Transverse colon (tissue), 4 donors: ENCODE measurements at regions of chr19 and their contacts with region 1.

Region 1: GRCh38 chr19:50794439-50795237 is 4.4 kb downstream of the ACP4 start:
- DNase-seq: peak; percentile 38
- H3K4me3 ChIP-seq: no peak overlapping the region
- H3K27ac ChIP-seq: no peak overlapping the region
- H3K4me1 ChIP-seq: no peaks in the 10 kb centered on the region
- H3K27me3 ChIP-seq: peaks cover 8% of the 10 kb centered on the region
- CTCF ChIP-seq: peak in 3 of 5 experiments; percentile 23 to 29 (median 24)
- EP300 ChIP-seq: no peak
- POLR2A ChIP-seq: no peak

Region 2: GRCh38 chr19:50537762-50538230 is 256.8 kb before region 1 on chr19:
- in situ Hi-C with region 1: loop called in 3 of 4 experiments (anchors 10 to 25 kb)
- intact Hi-C with region 1: no loop called
- DNase-seq: peak; percentile 76
- H3K4me3 ChIP-seq: no peak overlapping the region
- H3K27ac ChIP-seq: no peak overlapping the region
- H3K4me1 ChIP-seq: no peaks in the 10 kb centered on the region
- H3K27me3 ChIP-seq: no peaks in the 10 kb centered on the region
- CTCF ChIP-seq: peak; percentile 49 to 68 (median 57)
- EP300 ChIP-seq: no peak
- POLR2A ChIP-seq: no peak